HEK293 (cell line): ENCODE measurements at regions of chr1 and their contacts with region 1.

Region 1: GRCh38 chr1:62424411-62424810 is 12.4 kb upstream of the USP1 start:
- H3K4me3 ChIP-seq: no peak overlapping the region
- H3K27ac ChIP-seq: no peak overlapping the region
- H3K4me1 ChIP-seq: no peaks in the 10 kb centered on the region
- CTCF ChIP-seq: no peak

Region 2: DNA sequence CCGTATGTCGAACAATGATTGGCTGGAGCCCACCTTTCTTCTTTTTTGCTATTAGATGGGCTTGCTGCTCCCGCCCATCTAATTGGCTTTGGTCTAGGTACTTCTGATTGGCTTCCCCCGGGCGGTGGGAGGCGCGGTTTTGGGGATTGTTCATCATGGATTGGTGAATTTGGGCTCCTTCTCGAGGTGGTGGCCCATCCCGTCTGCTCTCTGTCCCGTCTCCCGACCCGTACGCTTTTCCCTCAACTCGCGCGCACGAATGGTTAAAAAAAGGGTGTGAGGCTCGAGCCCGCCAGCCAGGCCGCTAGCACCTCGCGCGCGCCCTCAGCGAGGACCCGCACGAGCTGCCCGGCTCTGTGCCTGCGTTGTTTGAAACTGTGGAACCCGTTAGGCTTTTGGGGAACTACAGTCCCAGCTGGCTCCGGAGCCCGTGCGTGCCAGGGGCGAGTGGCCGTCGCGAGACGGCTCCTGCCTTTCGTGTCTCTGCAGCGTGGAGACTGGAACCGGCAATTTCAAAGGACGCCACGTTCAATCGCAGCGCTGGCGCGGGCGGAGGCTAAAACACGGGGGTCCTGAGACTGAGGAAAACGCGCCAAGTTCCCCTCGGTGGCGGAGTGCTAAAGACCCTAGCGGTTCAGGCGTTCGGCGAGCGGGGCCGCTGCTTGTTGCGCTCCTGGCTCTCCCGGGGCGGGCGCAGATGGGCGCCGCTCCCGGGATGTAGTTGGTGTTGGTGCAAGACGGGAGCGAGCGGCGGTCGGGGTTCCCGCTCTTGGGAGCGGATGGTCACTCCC is 12.2 kb after region 1 on chr1 and contains the start of gene USP1:
- CTCF ChIA-PET with region 1: no interaction called
- POLR2A ChIA-PET with region 1: interaction called, 11 read pairs
- H3K4me3 ChIP-seq: peak within 1 kb of the TSS; percentile 98
- H3K27ac ChIP-seq: peak within 1 kb of the TSS; percentile 98
- H3K4me1 ChIP-seq: no peaks in the 10 kb centered on the region
- CTCF ChIP-seq: peak; percentile 49

Region 3: GRCh38 chr1:62452951-62453350 is 28.5 kb after region 1 on chr1:
- CTCF ChIA-PET with region 1: no interaction called
- POLR2A ChIA-PET with region 1: no interaction called
- H3K4me3 ChIP-seq: no peak overlapping the region
- H3K27ac ChIP-seq: no peak overlapping the region
- H3K4me1 ChIP-seq: no peaks in the 10 kb centered on the region
- CTCF ChIP-seq: no peak